Naive thymus-derived CD4-positive, alpha-beta T cell (primary cell): ENCODE measurements at regions of chr2 and their contacts with region 1.

Region 1: DNA sequence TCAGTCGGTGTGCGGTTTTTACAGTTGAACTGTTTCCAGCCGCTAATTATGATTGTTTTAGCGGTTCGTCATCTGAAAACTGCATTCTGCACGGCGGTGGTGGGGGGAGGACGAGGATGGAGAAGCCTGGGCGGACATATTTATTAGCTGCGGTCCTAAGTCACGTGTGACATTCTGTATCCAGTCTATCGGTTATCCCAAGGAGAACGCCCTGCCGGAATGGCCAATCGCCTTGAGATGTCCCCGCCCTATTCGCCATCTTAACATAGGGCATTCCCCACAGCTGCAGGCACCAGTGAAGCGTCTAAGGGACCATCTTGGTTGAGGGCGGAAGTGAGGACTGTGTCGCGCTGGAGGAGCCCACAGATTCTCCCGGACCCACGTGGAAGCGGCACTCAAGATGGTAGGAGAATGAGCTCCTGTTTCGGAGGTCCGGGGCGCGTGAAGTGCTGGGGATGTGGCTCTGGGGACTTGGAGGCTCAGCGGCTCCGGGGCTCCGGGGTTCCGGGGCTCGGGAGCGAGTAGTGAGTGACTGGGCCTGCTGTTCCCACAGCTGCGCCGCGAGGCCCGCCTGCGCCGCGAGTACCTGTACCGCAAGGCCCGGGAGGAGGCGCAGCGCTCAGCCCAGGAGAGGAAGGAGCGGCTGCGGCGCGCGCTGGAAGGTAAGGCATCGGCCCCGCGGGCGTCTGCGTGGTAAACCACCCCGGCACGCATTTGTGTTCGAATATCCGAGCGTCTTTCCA is at the start of gene IMP4:
- DNase-seq: peak; percentile 83 to 98 (median 96)
- ATAC-seq: peak; percentile 93
- H3K4me3 ChIP-seq: peak within 1 kb of the TSS; percentile 80
- H3K4me3 Mint-ChIP-seq: peak within 1 kb of the TSS; percentile 94 to 100 (median 99)
- H3K27ac ChIP-seq: peak within 1 kb of the TSS; percentile 97
- H3K27ac Mint-ChIP-seq: peak within 1 kb of the TSS; percentile 98 to 100 (median 99)
- H3K4me1 ChIP-seq: peaks cover 10 to 19% of the 10 kb centered on the region in 2 donors
- H3K4me1 Mint-ChIP-seq: peaks cover 17 to 51% (median 37%) of the 10 kb centered on the region in 7 donors
- H3K27me3 ChIP-seq: no peaks in the 10 kb centered on the region
- H3K27me3 Mint-ChIP-seq: peaks cover 0 to 2% (median 0%) of the 10 kb centered on the region in 5 donors
- total RNA-seq, gene IMP4: 69.9 to 88.5 (median 79.3) TPM

Region 2: GRCh38 chr2:129877289-129877779 is 465.4 kb before region 1 on chr2:
- CTCF ChIA-PET with region 1: interaction called, 3 read pairs
- POLR2A ChIA-PET with region 1: interaction called, 5 read pairs
- intact Hi-C with region 1: loop called (anchors 1 to 2 kb)
- DNase-seq: peak; percentile 61 to 82 (median 78)
- ATAC-seq: peak; percentile 95
- H3K4me3 ChIP-seq: peak overlapping the region; percentile 96
- H3K4me3 Mint-ChIP-seq: peak overlapping the region; percentile 86 to 99 (median 96)
- H3K27ac ChIP-seq: peak overlapping the region; percentile 78
- H3K27ac Mint-ChIP-seq: peak overlapping the region; percentile 77 to 97 (median 92)
- H3K4me1 ChIP-seq: peaks cover 5 to 7% of the 10 kb centered on the region in 2 donors
- H3K4me1 Mint-ChIP-seq: peaks cover 6 to 18% (median 13%) of the 10 kb centered on the region in 7 donors
- H3K27me3 ChIP-seq: no peaks in the 10 kb centered on the region
- H3K27me3 Mint-ChIP-seq: peaks cover 0 to 2% (median 0%) of the 10 kb centered on the region in 5 donors

Region 3: DNA sequence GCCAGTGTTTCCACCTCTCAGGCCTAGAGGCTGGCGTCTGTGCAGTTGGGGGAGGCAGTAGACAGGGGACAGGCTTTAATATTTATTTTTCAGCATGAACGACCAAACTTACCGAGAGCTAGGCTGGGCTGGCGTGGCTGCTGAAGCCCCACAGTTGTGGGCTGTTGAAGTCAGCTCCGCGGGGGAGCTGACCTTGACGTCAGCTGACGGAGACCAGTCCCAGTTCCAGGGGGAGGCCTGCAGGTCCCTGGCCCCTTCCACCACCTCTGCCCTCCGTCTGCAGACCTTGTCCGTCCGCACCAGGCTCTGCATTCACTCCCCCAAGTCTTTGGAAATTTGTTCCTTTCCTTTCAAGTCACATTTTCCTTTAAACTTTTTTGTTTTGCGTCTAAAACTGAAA is 111.0 kb before region 1 on chr2:
- CTCF ChIA-PET with region 1: no interaction called
- POLR2A ChIA-PET with region 1: no interaction called
- intact Hi-C with region 1: loop called in 1 of 2 experiments (anchors 1 kb)
- DNase-seq: no peak
- ATAC-seq: no peak
- H3K4me3 ChIP-seq: no peak overlapping the region
- H3K4me3 Mint-ChIP-seq: peak overlapping the region in 1 of 10 donors; percentile 14
- H3K27ac ChIP-seq: no peak overlapping the region
- H3K27ac Mint-ChIP-seq: no peak overlapping the region
- H3K4me1 ChIP-seq: no peaks in the 10 kb centered on the region
- H3K4me1 Mint-ChIP-seq: no peaks in the 10 kb centered on the region
- H3K27me3 ChIP-seq: no peaks in the 10 kb centered on the region
- H3K27me3 Mint-ChIP-seq: peaks cover 2 to 28% (median 7%) of the 10 kb centered on the region in 5 donors

Region 4: GRCh38 chr2:130355578-130356431 is 13.1 kb after region 1 on chr2 and contains the start of gene PTPN18:
- CTCF ChIA-PET with region 1: interaction called, 19 read pairs
- POLR2A ChIA-PET with region 1: interaction called, 58 read pairs
- intact Hi-C with region 1: loop called (anchors 1 kb)
- DNase-seq: peak; percentile 27 to 79 (median 46)
- ATAC-seq: peak; percentile 93
- H3K4me3 ChIP-seq: peak within 1 kb of the TSS; percentile 65
- H3K4me3 Mint-ChIP-seq: peak within 1 kb of the TSS; percentile 75 to 91 (median 84)
- H3K27ac ChIP-seq: peak within 1 kb of the TSS; percentile 56
- H3K27ac Mint-ChIP-seq: peak within 1 kb of the TSS in 7 of 9 donors; percentile 45 to 81 (median 63)
- H3K4me1 ChIP-seq: peaks cover 0 to 9% of the 10 kb centered on the region in 2 donors
- H3K4me1 Mint-ChIP-seq: peaks cover 8 to 17% (median 13%) of the 10 kb centered on the region in 7 donors
- H3K27me3 ChIP-seq: no peaks in the 10 kb centered on the region
- H3K27me3 Mint-ChIP-seq: peaks cover 0 to 8% (median 0%) of the 10 kb centered on the region in 5 donors
- total RNA-seq, gene PTPN18: 43.3 to 112 (median 44.2) TPM

Region 5: GRCh38 chr2:130391058-130391871 is 48.6 kb after region 1 on chr2:
- CTCF ChIA-PET with region 1: no interaction called
- POLR2A ChIA-PET with region 1: interaction called, 5 read pairs
- intact Hi-C with region 1: loop called (anchors 1 kb)
- DNase-seq: peak; percentile 37 to 77 (median 56)
- ATAC-seq: peak; percentile 94
- H3K4me3 ChIP-seq: peak overlapping the region; percentile 56
- H3K4me3 Mint-ChIP-seq: peak overlapping the region; percentile 80 to 94 (median 88)
- H3K27ac ChIP-seq: peak overlapping the region; percentile 32
- H3K27ac Mint-ChIP-seq: peak overlapping the region; percentile 62 to 97 (median 87)
- H3K4me1 ChIP-seq: peaks cover 5 to 8% of the 10 kb centered on the region in 2 donors
- H3K4me1 Mint-ChIP-seq: peaks cover 8 to 20% (median 18%) of the 10 kb centered on the region in 7 donors
- H3K27me3 ChIP-seq: no peaks in the 10 kb centered on the region
- H3K27me3 Mint-ChIP-seq: peaks cover 0 to 15% (median 9%) of the 10 kb centered on the region in 5 donors

Region 6: DNA sequence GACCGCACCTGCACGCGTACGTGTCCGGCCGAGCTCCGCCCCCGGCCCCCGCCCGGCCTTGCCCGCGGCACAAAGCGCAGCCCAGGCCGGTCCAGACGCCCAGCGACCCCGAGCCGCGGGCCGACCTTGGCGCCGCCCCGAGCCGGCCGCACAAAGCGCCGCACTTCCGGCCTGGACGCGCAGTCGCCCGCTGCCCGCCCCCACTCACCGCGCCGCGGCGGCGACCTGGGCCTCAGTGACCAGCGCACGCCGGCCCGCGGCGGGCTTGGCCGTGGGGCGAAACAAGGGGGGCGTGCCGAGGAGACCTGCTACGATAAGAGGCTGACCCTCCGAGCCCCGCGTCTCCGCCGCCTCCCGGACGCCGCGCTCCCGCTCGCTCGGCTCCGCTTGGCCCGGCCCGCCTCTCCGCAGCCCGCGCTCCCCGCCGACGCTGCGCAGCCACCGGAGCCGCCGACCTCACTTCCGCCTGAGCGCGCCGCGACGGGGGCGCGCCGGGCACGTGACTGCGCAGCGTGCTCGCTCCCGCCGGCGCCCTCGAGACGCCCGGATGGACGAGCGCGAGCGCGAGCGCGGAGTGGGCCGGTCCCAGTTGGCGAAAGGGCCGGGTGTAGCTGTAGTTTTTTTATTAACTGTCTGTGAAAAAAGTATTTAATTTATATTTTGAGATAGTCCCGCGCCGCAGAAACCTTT is 750.4 kb after region 1 on chr2 and contains the start of gene FAM168B:
- CTCF ChIA-PET with region 1: no interaction called
- POLR2A ChIA-PET with region 1: interaction called, 10 read pairs
- intact Hi-C with region 1: loop called in 1 of 2 experiments (anchors 1 kb)
- DNase-seq: peak; percentile 82 to 96 (median 92)
- ATAC-seq: peak; percentile 92
- H3K4me3 ChIP-seq: peak within 1 kb of the TSS; percentile 81
- H3K4me3 Mint-ChIP-seq: peak within 1 kb of the TSS; percentile 82 to 98 (median 94)
- H3K27ac ChIP-seq: peak within 1 kb of the TSS; percentile 99
- H3K27ac Mint-ChIP-seq: peak within 1 kb of the TSS; percentile 88 to 97 (median 96)
- H3K4me1 ChIP-seq: peaks cover 0 to 12% of the 10 kb centered on the region in 2 donors
- H3K4me1 Mint-ChIP-seq: peaks cover 7 to 37% (median 24%) of the 10 kb centered on the region in 7 donors
- H3K27me3 ChIP-seq: no peaks in the 10 kb centered on the region
- H3K27me3 Mint-ChIP-seq: no peaks in the 10 kb centered on the region
- total RNA-seq, gene FAM168B: 50.5 to 82.9 (median 66.7) TPM